ENCODE measurements at regions of chr3 and their contacts with region 1.

Region 1: GRCh38 chr3:45499529-45499928 is 95.0 kb upstream of the LIMD1 start:
- DNase-seq: no peak
- ATAC-seq: no peak
- H3K4me3 Mint-ChIP-seq: no peak overlapping the region
- H3K27ac Mint-ChIP-seq: no peak overlapping the region
- H3K4me1 Mint-ChIP-seq: peaks cover 15% of the 10 kb centered on the region
- H3K27me3 Mint-ChIP-seq: no peaks in the 10 kb centered on the region

Region 2: GRCh38 chr3:43742920-43743319 is 1756.6 kb before region 1 on chr3:
- CTCF ChIA-PET with region 1: no interaction called
- POLR2A ChIA-PET with region 1: no interaction called
- intact Hi-C with region 1: no loop called
- DNase-seq: no peak
- ATAC-seq: no peak
- H3K4me3 Mint-ChIP-seq: no peak overlapping the region
- H3K27ac Mint-ChIP-seq: no peak overlapping the region
- H3K4me1 Mint-ChIP-seq: no peaks in the 10 kb centered on the region
- H3K27me3 Mint-ChIP-seq: no peaks in the 10 kb centered on the region

Region 3: GRCh38 chr3:45210308-45211041 is 289.1 kb before region 1 on chr3:
- CTCF ChIA-PET with region 1: no interaction called
- POLR2A ChIA-PET with region 1: no interaction called
- intact Hi-C with region 1: loop called in 1 of 2 experiments (anchors 5 kb)
- DNase-seq: peak; percentile 90
- ATAC-seq: peak; percentile 91
- H3K4me3 Mint-ChIP-seq: no peak overlapping the region
- H3K27ac Mint-ChIP-seq: no peak overlapping the region
- H3K4me1 Mint-ChIP-seq: peaks cover 28% of the 10 kb centered on the region
- H3K27me3 Mint-ChIP-seq: peaks cover 10% of the 10 kb centered on the region